ENCODE measurements at regions of chr13 and their contacts with region 1.

Region 1: GRCh38 chr13:49082653-49083536 is 107.2 kb downstream of the FNDC3A start:
- DNase-seq: peak; percentile 95
- H3K4me3 ChIP-seq: no peak overlapping the region
- H3K27ac ChIP-seq: peak overlapping the region; percentile 84
- H3K4me1 ChIP-seq: peaks cover 36% of the 10 kb centered on the region
- H3K27me3 ChIP-seq: no peaks in the 10 kb centered on the region
- CTCF ChIP-seq: no peak

Region 2: DNA sequence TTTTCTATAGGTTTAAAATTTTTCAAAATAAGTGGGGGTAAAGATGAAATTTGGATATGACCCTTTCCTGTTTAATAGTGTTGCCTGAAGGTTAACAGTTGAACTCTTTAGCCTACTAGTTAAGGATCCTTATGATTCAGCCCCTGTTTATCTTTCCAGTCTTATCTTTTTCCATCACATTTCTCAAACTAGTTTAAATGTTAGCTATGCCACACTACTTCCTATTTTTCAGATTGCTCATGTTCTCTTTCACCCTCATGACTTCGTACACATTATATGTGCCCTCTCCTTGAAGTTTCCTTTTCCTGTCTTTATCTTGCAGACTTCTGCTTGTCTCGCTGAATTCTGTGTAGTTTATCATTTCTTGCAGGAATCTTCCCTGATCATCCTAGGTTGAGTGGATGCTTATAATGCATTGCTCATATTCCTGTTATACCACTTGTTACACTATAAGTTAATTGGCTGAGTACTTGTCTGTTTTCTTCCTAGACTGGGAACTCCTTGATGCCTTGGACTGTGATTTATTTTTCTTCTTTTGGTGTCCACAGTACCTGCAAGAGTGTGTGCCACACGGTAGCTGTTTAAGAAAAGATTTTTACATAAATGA is 20.5 kb before region 1 on chr13:
- CTCF ChIA-PET with region 1: no interaction called
- dilution Hi-C with region 1: no loop called
- in situ Hi-C with region 1: no loop called
- intact Hi-C with region 1: loop called (anchors 2 kb)
- DNase-seq: no peak
- H3K4me3 ChIP-seq: no peak overlapping the region
- H3K27ac ChIP-seq: no peak overlapping the region
- H3K4me1 ChIP-seq: peaks cover 20% of the 10 kb centered on the region
- H3K27me3 ChIP-seq: no peaks in the 10 kb centered on the region
- CTCF ChIP-seq: no peak

Measured in mammary epithelial cell (primary cell).